ENCODE measurements at regions of chr11 and their contacts with region 1.

Region 1: DNA sequence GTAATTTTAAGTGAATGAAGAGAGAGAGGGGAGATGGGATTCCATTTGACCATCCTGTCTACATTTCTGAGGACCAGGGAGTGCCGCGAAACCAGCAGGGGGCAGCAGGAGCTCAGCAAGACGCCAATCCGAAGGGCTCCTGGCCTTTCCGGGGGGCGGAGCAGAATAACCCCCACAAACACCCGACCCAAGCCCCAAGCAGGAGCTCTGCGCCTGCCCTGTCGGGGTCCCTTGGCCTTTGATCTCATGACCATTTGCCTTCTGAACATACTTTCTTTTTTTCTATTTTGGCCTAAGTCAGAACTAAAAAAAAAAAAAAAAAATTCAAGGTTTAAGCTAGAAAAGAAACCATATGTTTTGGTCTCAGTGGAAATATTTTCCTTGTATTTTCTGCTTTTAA is 21.9 kb upstream of the SCN2B start:
- DNase-seq: peak; percentile 42
- ATAC-seq: peak; percentile 96
- H3K4me3 ChIP-seq: no peak overlapping the region
- H3K27ac ChIP-seq: no peak overlapping the region
- H3K4me1 ChIP-seq: 0 out of 2 replicates have a peak, but pooled peaks cover 3% of the 10 kb centered on the region
- H3K27me3 ChIP-seq: peaks cover 7% of the 10 kb centered on the region; the same call in 1 of the 2 replicates
- CTCF ChIP-seq: peak; percentile 98

Region 2: DNA sequence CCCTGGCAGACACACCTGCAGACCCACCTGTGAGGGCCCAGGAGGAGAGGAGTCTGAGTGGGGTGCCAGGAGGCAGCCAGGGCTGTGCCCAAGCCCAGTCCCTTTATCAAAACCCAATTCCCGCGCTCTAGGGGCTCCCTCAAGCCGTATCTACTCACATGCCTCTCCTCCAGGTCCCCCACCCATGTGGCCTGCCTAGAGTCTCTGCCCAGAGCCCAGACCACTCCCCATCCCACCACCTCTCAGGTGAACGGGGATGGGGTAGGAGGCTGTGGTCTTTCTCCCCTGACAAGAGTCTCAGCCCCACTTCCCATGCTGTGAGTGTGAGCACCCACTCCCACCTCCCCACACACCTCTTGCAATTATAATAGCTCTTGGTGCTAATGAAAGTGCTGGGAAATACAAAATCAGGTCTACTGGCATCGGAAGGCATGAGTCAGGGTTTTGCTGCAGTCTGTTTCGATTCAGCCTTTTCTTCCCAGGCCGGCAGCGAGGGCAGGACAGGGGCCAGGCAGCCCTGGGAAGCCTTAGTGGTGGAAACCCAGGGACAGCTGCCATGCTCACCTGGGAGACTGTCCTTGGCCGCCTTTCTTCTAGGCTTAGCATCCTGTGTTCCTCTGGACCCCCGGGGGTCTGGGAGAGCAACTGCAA is 138.2 kb before region 1 on chr11:
- CTCF ChIA-PET with region 1: interaction called, 10 read pairs
- POLR2A ChIA-PET with region 1: no interaction called
- in situ Hi-C with region 1: no loop called
- intact Hi-C with region 1: no loop called
- DNase-seq: no peak
- ATAC-seq: peak; percentile 26; the same call in 1 of the 2 replicates
- H3K4me3 ChIP-seq: no peak overlapping the region
- H3K27ac ChIP-seq: no peak overlapping the region
- H3K4me1 ChIP-seq: no peaks in the 10 kb centered on the region
- H3K27me3 ChIP-seq: no peaks in the 10 kb centered on the region; the same call in 1 of the 2 replicates
- CTCF ChIP-seq: no peak

Region 3: GRCh38 chr11:118171269-118172062 is 26.9 kb before region 1 on chr11:
- CTCF ChIA-PET with region 1: interaction called, 12 read pairs
- POLR2A ChIA-PET with region 1: no interaction called
- in situ Hi-C with region 1: no loop called
- intact Hi-C with region 1: no loop called
- DNase-seq: peak; percentile 30
- ATAC-seq: peak; percentile 90
- H3K4me3 ChIP-seq: no peak overlapping the region
- H3K27ac ChIP-seq: no peak overlapping the region
- H3K4me1 ChIP-seq: no peaks in the 10 kb centered on the region
- H3K27me3 ChIP-seq: peaks cover 10% of the 10 kb centered on the region
- CTCF ChIP-seq: peak; percentile 99

Region 4: DNA sequence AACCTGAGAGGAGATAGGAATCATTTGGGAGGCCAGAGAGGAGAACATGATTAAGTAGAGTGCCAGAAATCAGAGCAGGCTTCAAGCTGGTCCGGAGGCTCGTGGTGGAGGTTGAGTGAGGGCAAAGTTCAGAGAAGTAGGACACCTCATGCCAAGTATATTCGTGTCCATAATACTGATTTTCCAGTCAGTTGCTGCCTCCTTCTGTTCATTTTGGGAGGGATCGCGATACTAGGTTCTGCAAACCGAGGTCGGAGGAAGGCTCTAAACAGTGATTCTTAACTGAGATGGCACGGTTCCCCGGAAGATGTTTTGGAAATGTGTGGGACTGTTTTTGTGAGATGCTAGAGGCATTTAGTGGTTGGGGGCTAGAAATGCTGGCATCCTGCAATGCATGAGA is 92.6 kb after region 1 on chr11:
- CTCF ChIA-PET with region 1: interaction called, 5 read pairs
- POLR2A ChIA-PET with region 1: no interaction called
- in situ Hi-C with region 1: no loop called
- intact Hi-C with region 1: loop called (anchors 2 kb)
- DNase-seq: no peak
- ATAC-seq: peak; percentile 83
- H3K4me3 ChIP-seq: no peak overlapping the region
- H3K27ac ChIP-seq: no peak overlapping the region
- H3K4me1 ChIP-seq: no peaks in the 10 kb centered on the region; the same call in 1 of the 2 replicates
- H3K27me3 ChIP-seq: peaks cover 14% of the 10 kb centered on the region
- CTCF ChIP-seq: peak; percentile 72

Region 5: DNA sequence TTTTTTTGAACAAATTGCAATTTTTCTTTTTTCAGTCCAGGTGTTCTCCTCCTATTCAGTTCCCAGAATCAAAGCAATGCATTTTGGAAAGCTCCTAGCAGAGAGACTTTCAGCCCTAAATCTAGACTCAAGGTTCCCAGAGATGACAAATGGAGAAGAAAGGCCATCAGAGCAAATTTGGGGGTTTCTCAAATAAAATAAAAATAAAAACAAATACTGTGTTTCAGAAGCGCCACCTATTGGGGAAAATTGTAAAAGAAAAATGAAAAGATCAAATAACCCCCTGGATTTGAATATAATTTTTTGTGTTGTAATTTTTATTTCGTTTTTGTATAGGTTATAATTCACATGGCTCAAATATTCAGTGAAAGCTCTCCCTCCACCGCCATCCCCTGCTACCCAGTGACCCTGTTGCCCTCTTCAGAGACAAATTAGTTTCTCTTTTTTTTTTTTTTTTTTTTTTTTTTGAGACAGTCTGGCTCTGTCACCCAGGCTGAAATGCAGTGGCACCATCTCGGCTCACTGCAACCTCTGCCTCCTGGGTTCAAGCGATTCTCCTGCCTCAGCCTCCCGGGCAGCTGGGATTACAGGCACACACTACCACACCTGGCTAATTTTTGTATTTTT is 154.8 kb after region 1 on chr11:
- CTCF ChIA-PET with region 1: interaction called, 5 read pairs
- POLR2A ChIA-PET with region 1: no interaction called
- in situ Hi-C with region 1: no loop called
- intact Hi-C with region 1: loop called (anchors 2 kb)
- DNase-seq: no peak
- ATAC-seq: no peak
- H3K4me3 ChIP-seq: no peak overlapping the region
- H3K27ac ChIP-seq: no peak overlapping the region
- H3K4me1 ChIP-seq: no peaks in the 10 kb centered on the region
- H3K27me3 ChIP-seq: peaks cover 22% of the 10 kb centered on the region
- CTCF ChIP-seq: peak; percentile 77

Region 6: GRCh38 chr11:118488480-118489109 is 290.2 kb after region 1 on chr11:
- CTCF ChIA-PET with region 1: no interaction called
- POLR2A ChIA-PET with region 1: no interaction called
- in situ Hi-C with region 1: no loop called
- intact Hi-C with region 1: loop called (anchors 10 kb)
- DNase-seq: peak; percentile 59
- ATAC-seq: peak; percentile 86
- H3K4me3 ChIP-seq: no peak overlapping the region
- H3K27ac ChIP-seq: no peak overlapping the region
- H3K4me1 ChIP-seq: no peaks in the 10 kb centered on the region
- H3K27me3 ChIP-seq: no peaks in the 10 kb centered on the region
- CTCF ChIP-seq: peak; percentile 93

Measured in Panc1 (cell line).